HAP-1 (cell line): ENCODE measurements at regions of chr3 and their contacts with region 1.

Region 1: DNA sequence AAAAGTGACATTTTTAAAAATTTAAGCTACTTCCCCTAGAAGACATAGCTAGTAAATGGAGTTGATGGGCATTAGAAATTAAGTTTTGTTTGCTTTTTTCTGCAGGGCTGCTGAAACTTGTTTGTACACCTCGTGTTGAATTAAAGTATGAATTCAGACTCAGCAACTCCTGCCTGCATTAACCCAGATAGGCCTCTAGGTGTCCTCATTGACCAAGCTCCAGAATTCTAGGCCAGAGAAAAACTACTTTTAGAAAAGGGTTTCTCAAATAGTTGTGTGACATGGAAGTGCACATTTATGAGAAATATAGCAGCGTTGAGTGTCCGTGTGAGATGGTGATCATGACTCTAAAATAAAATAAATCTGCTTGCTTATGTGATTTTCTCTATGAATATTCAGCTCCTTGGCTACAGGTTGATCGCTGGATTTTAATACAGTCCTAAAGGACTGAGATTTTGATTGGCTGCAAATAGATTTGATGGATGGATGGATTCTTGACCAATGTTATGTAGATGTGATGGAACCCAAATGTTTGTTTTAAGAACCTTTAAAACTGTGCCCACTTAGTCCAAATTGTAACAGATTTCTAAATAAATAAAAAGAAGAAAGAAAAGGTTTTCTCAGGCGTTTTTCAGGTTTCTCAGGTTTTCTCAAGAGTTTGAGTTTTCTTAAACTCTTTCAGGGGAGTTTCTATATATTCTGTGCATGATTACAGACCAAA is 39.4 kb upstream of the LMOD3 start:
- DNase-seq: peak; percentile 36 to 78
- H3K4me3 ChIP-seq: no peak overlapping the region
- H3K4me1 ChIP-seq: no peaks in the 10 kb centered on the region
- H3K27me3 ChIP-seq: peaks cover 4% of the 10 kb centered on the region; the same call in 1 of the 2 replicates

Region 2: DNA sequence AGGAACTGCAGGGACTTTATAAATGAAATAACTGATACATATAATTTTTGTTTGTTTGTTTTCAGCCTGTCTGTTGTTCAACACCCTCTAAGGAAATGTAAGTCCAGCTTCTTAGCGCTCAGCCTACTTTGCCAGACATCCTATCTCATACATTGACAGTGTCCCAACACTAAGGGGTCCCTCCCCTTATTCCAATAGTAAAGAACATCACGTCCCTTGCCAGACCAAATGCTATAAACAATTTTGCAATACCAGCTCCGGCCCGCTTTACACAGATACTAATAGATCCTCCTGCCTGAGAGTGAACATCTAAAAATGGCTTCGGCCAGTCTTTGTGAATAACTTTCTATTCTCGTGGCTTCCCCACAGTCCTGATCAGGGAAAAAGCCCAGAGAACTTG is 224.9 kb before region 1 on chr3:
- in situ Hi-C with region 1: no loop called
- DNase-seq: no peak
- H3K4me3 ChIP-seq: no peak overlapping the region
- H3K4me1 ChIP-seq: peaks cover 6% of the 10 kb centered on the region
- H3K27me3 ChIP-seq: no peaks in the 10 kb centered on the region

Region 3: DNA sequence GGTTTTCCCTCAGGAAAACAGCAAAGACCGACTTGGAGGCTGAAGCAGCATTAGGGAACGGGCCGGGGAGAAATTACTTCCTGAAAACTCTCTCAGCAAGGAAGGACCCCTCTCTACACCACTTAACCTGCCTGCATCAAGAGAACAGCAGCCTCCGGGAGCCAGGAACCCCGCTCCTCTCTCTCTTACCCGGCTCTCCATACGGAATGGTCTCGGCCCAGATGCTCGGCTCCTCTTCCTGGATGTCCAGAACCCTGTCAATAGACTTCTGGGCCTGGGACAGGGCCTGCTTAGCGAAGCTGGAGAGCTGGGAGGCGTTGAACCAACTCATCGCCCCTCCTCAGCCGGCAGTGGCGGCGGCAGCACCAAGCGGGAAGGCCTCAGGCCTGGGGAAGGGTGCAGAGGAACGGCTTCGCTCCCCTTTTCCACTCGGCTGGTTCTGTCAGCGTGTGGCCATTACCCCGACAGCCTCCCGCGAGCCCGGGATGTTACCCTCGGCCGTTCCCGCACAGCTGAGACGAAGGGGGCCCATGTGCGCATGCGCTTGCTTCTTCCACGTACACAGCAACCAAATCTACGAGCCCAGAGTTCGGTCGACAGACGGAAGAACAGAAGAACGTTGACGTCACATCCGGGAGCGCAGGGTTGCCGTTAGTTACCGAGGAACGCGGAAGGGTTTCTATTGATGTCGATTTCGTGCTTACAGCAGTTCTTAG is 109.8 kb before region 1 on chr3 and contains the start of gene TMF1:
- in situ Hi-C with region 1: no loop called
- DNase-seq: peak; percentile 97 to 98
- H3K4me3 ChIP-seq: peak within 1 kb of the TSS; percentile 87
- H3K4me1 ChIP-seq: peaks cover 3% of the 10 kb centered on the region; the same call in 1 of the 2 replicates
- H3K27me3 ChIP-seq: no peaks in the 10 kb centered on the region

Region 4: DNA sequence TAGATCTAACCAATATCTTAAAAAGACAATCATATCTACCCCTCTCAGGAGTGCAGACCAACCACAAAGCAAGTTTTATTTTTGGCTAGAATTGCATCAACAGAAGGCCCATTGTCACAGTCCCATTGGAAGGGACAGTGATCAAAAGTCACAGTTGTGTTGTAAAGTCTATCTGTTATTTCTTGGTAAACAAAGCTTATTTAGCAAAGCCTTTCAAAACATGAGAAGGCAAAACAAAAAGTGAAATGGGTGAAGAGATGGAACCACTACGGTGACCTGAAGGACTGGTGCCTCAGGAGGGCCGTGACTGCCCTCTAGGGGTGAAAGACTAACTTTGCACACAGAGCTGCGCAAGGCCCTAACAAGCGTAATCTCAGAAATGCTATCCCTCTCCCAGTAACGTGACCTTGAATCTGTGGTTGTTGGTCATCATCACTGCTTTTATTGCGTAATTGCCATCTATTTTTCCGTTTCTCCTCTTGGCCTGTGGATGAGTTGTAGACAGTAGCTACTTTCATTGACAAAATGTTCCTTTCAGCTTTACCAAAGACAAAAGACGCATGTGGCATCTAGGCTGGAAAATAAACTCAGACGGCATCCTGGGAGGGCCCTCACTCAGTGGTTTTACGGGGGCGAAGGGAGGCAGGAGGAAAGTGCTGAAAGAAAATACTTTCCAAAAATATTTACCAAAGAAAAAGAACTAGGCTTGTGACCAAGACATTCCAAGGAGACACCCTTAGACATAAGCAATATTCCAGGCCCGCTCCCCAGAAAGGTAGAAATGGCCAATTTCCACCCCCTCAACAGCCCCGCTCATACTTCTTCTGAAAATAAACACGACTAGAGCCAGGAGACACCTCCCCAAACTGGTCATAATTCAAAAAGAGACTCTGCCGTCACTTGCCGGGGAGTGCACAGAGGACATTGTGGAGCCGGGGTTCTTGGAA is 144.8 kb after region 1 on chr3:
- in situ Hi-C with region 1: loop called (anchors 5 kb)
- DNase-seq: peak; percentile 68 to 74
- H3K4me3 ChIP-seq: no peak overlapping the region
- H3K4me1 ChIP-seq: no peaks in the 10 kb centered on the region
- H3K27me3 ChIP-seq: no peaks in the 10 kb centered on the region

Region 5: DNA sequence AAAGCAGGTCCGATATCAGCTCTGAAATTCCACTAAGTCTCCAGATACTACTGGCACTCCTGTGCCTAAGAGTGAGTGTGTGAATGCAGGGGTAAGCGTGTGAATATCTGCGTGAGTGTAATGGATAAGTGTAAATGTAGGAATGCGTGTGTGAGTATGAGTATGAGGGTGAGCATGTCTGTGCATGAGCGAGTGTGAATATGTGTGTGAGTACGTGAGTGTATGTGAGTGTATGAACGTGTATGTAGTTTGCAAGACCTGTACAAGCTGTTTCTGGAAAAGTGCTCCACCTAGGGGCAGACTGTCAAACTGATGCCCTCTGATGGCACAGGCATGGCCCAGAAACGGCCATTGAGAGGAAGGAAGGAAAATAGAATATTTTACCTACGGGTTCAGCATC is 248.5 kb after region 1 on chr3:
- in situ Hi-C with region 1: loop called (anchors 25 kb)
- DNase-seq: peak; percentile 53 to 81
- H3K4me3 ChIP-seq: no peak overlapping the region
- H3K4me1 ChIP-seq: no peaks in the 10 kb centered on the region
- H3K27me3 ChIP-seq: no peaks in the 10 kb centered on the region

Region 6: DNA sequence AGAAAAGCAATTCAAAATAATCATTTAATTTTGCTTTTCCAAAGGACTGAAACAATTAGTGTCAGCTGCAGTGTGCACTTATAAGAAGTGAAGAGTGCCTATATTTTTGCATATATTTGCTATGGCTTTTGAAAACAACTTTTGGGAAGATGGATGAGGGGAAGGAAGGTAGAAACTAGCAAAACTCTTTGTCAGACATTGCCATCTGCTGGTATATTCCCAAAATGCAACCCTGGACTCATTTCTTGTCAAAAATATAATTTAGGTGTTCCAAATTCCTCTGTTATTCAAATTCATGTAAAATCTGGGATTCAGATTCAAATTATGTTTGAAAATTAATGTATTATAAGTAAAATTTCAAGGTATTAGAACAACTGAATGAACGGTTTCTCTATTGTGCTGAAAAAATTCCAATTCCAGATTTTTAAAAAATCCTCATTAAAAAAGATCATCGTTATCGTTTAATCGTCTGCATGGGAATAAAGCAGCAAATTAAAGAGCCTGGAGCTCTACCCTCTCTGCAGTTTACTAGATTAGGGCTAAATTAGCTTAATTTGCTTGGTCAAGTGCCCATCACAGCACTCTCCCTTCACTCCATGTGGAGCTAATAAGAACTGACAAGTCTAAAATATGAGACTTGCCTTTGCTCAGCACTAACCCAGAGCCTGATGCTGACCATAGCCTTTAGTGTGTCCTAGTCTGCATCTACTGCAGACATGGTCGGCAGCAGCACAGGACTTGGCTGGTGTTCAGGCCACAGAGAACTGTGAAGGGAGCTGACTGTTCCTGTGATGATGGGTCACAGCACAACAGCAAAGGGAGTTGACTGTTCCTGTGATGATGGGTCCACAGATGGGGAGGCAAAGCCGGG is 509.6 kb after region 1 on chr3:
- in situ Hi-C with region 1: loop called (anchors 25 kb)
- DNase-seq: peak; percentile 70 to 71
- H3K4me3 ChIP-seq: no peak overlapping the region
- H3K4me1 ChIP-seq: no peaks in the 10 kb centered on the region
- H3K27me3 ChIP-seq: no peaks in the 10 kb centered on the region